ENCODE measurements at regions of chr17 and their contacts with region 1.

Region 1: DNA sequence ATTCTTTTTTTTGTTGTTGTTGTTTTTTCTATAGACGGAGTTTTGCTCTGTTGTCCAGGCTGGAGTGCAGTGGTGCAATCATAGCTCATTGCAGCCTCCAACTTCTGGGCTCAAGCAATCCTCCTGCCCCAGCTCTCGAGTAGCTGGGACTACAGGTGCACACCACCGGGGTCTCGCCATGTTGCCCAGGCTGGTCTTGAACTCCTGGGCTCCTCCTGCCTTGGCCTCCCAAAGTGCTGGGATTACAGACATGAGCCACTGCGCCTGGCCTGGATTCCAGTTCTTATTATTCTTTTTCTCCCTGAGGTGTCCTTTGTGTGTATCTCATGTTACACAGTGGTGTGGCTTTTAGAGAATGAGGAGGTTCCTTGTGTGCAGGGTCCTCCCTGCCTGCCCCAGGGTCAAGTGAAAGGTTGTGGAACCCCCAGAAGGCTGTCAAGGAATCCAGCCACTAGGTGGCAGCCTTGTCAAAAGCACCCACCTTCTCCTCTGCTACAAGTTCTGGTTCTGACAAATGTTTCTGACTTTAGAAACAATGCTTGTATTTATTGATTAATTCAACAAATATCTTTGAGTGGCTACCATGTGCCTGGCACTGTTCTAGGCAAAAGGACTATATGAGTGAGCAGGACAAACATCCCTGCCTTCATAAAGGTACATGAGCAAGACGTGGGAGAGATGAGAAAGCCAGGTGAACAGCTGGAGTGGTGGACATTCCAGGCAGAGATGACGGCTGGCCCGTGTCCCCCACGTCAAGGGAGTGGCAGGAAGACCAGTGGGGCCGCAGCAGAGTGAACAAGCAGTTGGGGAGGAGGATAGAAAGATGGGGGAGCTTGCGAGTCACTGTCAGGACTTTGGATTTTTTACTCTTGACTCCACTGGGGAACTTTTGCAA is 112.4 kb downstream of the SPECC1 start:
- DNase-seq: peak; percentile 59

Region 2: GRCh38 chr17:19992803-19993713 is 128.5 kb before region 1 on chr17:
- in situ Hi-C with region 1: loop called (anchors 25 kb)
- DNase-seq: peak; percentile 93

Region 3: DNA sequence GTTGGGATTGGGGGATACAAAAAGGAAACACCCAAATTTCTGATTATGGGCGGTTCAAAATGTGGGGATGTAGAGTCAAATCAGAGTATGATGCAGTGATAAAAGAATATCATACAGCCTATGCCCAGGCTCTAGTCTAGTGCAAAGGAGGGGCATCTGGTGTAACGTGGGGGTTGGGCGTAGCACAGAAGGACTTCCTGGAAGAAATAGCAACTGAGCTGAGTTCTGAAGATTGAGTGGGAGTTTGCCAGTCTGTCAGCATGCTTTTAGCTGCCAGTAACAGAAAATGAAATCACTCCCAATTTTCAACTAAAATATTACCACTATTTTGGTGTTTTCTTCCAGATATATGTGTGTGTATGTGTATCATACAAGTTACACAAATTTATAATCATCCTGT is 84.5 kb after region 1 on chr17:
- in situ Hi-C with region 1: loop called (anchors 25 kb)
- DNase-seq: peak; percentile 73

Region 4: GRCh38 chr17:20266806-20267458 is 145.3 kb after region 1 on chr17:
- in situ Hi-C with region 1: no loop called
- DNase-seq: peak; percentile 28